Activated T-helper 2 cell treated with anti-CD3 and anti-CD28 coated beads, Interferon-gamma antibody, Interleukin-2, Interleukin-4, amounts not matched to agents 10 μg/mL and 5 μg/mL and 100 μg/mL, durations not matched to agents 14 hours and 24 hours and 36 hours (primary cell): ENCODE measurements at regions of chr12 and their contacts with region 1.

Region 1: GRCh38 chr12:92136965-92137721 is 8.5 kb downstream of the BTG1 start:
- DNase-seq: no peak
- H3K4me3 Mint-ChIP-seq: peak overlapping the region; percentile 98
- H3K27ac Mint-ChIP-seq: peak overlapping the region; percentile 87
- H3K4me1 Mint-ChIP-seq: peaks cover 78% of the 10 kb centered on the region
- H3K27me3 Mint-ChIP-seq: no peaks in the 10 kb centered on the region

Region 2: DNA sequence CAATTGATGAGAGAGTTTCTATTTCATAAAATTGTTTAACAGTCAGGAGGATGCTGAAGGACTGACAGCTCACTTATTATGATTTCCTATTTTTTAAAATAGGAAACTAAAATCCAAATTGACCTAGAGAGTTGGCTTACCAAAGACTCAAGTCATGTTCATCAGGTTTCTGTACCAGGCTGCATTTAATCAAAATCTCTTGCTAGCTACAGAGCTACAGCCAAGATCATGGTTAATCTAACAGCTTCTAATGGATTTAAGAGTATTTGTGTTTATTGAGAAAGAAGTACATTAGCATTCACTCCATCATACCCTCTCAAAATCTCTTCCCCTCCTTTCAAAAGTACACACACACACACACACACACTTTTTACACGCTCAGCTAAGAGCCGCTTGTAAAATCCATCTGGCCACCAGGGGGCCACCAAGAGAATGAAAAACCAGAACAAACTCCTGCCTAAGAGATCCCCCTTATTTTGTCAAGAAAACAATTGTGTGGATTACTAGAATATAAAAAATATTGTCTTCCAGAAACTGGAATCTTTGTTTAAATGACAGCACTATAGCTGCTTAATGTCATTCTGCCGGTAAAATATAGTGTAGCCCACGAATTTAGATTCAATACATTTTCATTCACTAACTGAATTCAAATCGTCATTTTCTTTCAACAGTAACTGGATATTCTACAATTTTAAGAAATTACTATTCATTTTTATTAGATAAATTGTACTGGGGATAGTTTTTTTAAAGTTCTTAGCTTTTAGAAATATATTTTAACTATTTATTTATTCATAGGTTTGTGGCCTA is 325.5 kb before region 1 on chr12:
- intact Hi-C with region 1: loop called (anchors 5 kb)
- DNase-seq: peak; percentile 37
- H3K4me3 Mint-ChIP-seq: no peak overlapping the region
- H3K27ac Mint-ChIP-seq: no peak overlapping the region
- H3K4me1 Mint-ChIP-seq: peaks cover 15% of the 10 kb centered on the region
- H3K27me3 Mint-ChIP-seq: no peaks in the 10 kb centered on the region

Region 3: DNA sequence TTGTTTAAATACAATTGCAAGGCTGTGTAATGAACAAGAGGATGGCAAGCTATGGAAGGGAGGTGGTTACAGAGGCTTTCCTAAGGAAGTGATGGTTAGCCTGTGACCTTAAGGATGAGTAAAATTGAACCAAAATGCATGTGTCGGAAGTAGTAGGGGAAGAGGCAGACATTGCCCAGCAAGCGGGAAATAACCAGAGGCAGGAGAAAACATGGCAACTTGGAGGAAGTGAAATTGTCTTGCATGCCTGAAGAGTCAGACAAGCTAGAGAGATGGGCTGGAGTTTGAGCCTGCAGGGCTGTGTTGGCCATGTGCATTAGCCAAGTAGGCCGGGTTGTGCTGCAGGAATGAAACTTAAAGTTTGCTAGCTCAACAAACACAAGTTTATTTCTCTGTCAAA is 87.7 kb before region 1 on chr12:
- intact Hi-C with region 1: loop called (anchors 1 kb)
- DNase-seq: no peak
- H3K4me3 Mint-ChIP-seq: no peak overlapping the region
- H3K27ac Mint-ChIP-seq: no peak overlapping the region
- H3K4me1 Mint-ChIP-seq: peaks cover 71% of the 10 kb centered on the region
- H3K27me3 Mint-ChIP-seq: no peaks in the 10 kb centered on the region

Region 4: DNA sequence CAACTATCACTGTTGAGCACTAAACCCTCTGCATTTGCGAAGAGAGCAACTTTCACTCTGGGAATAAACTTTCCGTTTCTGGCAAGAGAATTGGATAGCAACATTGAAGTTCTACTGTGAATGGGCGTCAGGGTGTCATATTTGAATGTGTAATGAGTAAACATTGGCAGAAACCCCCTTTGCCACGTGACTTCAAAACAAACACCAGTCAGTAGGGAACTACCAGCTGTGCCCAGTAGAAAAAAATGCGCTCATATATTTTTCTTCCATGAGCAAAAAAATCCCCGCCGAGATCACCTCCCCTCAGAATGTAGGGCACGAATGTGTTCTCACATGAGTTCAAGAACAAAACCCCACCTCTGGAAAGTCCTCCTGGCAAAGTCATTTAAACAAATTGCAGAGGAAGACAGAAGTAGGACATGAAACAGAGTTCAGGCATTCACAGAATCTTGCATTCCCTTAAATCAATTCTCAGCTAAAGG is 72.1 kb before region 1 on chr12:
- intact Hi-C with region 1: loop called (anchors 5 kb)
- DNase-seq: no peak
- H3K4me3 Mint-ChIP-seq: no peak overlapping the region
- H3K27ac Mint-ChIP-seq: peak overlapping the region; percentile 54
- H3K4me1 Mint-ChIP-seq: peaks cover 45% of the 10 kb centered on the region
- H3K27me3 Mint-ChIP-seq: no peaks in the 10 kb centered on the region